Ascending aorta (tissue), 2 donors: ENCODE measurements at regions of chr11 and their contacts with region 1.

Region 1: GRCh38 chr11:69985641-69986439 is 92.3 kb upstream of the ANO1 start:
- DNase-seq: no peak
- H3K4me3 ChIP-seq: peak overlapping the region; percentile 62 to 74
- H3K27ac ChIP-seq: peak overlapping the region; percentile 87 to 98
- H3K4me1 ChIP-seq: peaks cover 16 to 73% of the 10 kb centered on the region in 2 donors
- H3K27me3 ChIP-seq: no peaks in the 10 kb centered on the region
- CTCF ChIP-seq: no peak

Region 2: DNA sequence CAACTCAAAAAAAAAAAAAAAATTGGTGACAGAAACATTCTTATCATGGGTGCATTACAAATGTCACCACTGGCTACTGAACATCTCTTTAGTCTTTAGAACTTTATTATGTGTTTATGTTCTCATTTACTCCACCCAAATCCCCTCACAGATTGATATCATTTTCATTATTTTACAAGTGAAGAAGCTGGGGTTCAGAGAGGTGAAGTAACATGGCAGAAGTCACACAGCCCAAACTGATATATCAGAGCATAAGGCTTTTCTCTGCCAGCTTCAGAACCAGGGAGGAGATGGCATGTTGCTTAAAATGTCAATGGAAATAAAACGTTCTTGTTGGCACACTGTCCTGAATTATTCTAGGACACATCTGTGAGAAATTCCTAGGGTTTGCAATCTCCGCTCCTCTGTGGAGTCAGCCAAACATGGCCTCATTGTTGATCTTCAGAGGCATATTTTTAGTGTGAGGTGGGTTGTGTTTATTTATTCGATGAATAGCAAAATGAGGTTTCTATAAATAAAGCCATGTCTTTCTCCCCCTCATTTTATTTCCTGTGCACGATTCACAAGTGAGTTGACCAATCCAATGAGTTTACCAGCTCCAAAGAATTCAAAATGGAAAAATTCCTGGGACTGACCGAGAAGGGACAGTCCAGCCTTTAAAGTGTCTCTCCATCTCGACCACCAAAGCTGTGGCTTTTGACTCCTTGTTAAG is 19.4 kb after region 1 on chr11:
- intact Hi-C with region 1: loop called (anchors 2 kb)
- DNase-seq: peak in 1 of 2 donors; percentile 79
- H3K4me3 ChIP-seq: no peak overlapping the region
- H3K27ac ChIP-seq: peak overlapping the region; percentile 82 to 86
- H3K4me1 ChIP-seq: peaks cover 5 to 21% of the 10 kb centered on the region in 2 donors
- H3K27me3 ChIP-seq: no peaks in the 10 kb centered on the region
- CTCF ChIP-seq: no peak